CD8-positive, alpha-beta T cell (primary cell): ENCODE measurements at regions of chr3 and their contacts with region 1.

Region 1: GRCh38 chr3:196081791-196082618 is at the start of gene TFRC:
- DNase-seq: peak; percentile 86 to 98 (median 95)
- ATAC-seq: peak; percentile 90
- H3K4me3 ChIP-seq: peak within 1 kb of the TSS; percentile 84 to 98
- H3K4me3 Mint-ChIP-seq: peak within 1 kb of the TSS; percentile 97
- H3K27ac ChIP-seq: peak within 1 kb of the TSS; percentile 88 to 99
- H3K27ac Mint-ChIP-seq: peak within 1 kb of the TSS; percentile 94
- H3K4me1 ChIP-seq: peaks cover 33% of the 10 kb centered on the region
- H3K4me1 Mint-ChIP-seq: peaks cover 36% of the 10 kb centered on the region
- H3K27me3 ChIP-seq: no peaks in the 10 kb centered on the region
- H3K27me3 Mint-ChIP-seq: no peaks in the 10 kb centered on the region
- CTCF ChIP-seq: no peak
- total RNA-seq, gene TFRC: 208 to 218 TPM

Region 2: DNA sequence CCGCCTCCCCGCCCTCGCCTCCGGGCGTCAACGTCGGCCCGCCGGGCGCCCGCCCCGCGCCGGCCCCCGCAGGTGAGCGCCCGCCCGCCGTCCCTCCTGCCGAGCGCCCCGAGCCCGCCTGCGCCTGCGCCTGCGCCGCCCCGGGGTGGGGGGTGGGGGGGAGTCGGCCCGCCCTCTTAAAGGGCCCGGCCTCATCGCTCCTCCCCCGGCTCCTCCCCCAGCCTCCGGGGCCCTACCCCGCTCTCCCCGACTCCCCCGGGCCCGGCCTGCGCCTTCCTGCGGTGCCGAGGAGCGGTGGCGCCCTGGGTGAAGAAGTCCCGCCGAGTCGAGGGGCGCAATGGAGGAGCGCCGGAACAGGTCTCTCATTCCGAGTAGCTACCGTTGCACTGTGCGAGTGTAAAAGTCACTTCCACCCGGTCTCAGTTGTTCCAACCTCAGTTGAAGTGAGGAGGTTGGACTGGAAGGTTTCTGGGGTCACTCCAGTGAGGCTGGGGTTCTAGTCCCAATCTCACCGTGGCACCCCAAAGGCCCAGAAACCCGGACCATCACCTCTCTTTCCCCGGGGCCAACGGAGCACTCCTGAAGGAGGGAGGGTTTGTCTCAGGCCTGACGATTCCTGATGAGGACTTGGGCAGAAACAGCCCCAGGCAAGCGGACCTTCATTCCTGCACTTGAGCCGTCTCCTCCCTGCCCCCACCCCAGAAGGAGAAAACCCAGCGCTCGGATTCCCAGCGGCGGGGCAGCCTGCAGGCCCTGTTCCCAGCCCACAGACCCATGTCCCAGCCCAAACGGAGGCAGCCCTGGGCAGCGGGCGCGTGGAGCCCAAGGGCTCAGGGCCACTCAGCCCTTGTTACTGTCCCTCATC is 172.1 kb before region 1 on chr3:
- CTCF ChIA-PET with region 1: no interaction called
- POLR2A ChIA-PET with region 1: no interaction called
- intact Hi-C with region 1: loop called in 1 of 2 experiments (anchors 5 kb)
- DNase-seq: peak; percentile 79 to 95 (median 90)
- ATAC-seq: peak; percentile 61
- H3K4me3 ChIP-seq: peak overlapping the region; percentile 32 to 52
- H3K4me3 Mint-ChIP-seq: peak overlapping the region; percentile 77
- H3K27ac ChIP-seq: peak overlapping the region; percentile 35 to 51
- H3K27ac Mint-ChIP-seq: peak overlapping the region; percentile 78
- H3K4me1 ChIP-seq: peaks cover 37% of the 10 kb centered on the region
- H3K4me1 Mint-ChIP-seq: peaks cover 36% of the 10 kb centered on the region
- H3K27me3 ChIP-seq: no peaks in the 10 kb centered on the region
- H3K27me3 Mint-ChIP-seq: no peaks in the 10 kb centered on the region
- CTCF ChIP-seq: no peak

Region 3: GRCh38 chr3:196192036-196192523 is 110.1 kb after region 1 on chr3:
- CTCF ChIA-PET with region 1: interaction called, 313 read pairs
- POLR2A ChIA-PET with region 1: interaction called, 3 read pairs
- intact Hi-C with region 1: no loop called
- DNase-seq: peak in 7 of 9 experiments; percentile 12 to 87 (median 51)
- ATAC-seq: peak; percentile 39
- H3K4me3 ChIP-seq: no peak overlapping the region
- H3K4me3 Mint-ChIP-seq: peak overlapping the region; percentile 39
- H3K27ac ChIP-seq: peak overlapping the region; percentile 16 to 79
- H3K27ac Mint-ChIP-seq: peak overlapping the region; percentile 92
- H3K4me1 ChIP-seq: peaks cover 22% of the 10 kb centered on the region
- H3K4me1 Mint-ChIP-seq: peaks cover 18% of the 10 kb centered on the region
- H3K27me3 ChIP-seq: no peaks in the 10 kb centered on the region
- H3K27me3 Mint-ChIP-seq: no peaks in the 10 kb centered on the region
- CTCF ChIP-seq: no peak

Region 4: GRCh38 chr3:196317687-196318467 is 235.9 kb after region 1 on chr3 and contains the start of gene DYNLT2B:
- CTCF ChIA-PET with region 1: no interaction called
- POLR2A ChIA-PET with region 1: no interaction called
- intact Hi-C with region 1: loop called in 1 of 2 experiments (anchors 1 kb)
- DNase-seq: peak; percentile 73 to 95 (median 84)
- ATAC-seq: peak; percentile 90
- H3K4me3 ChIP-seq: peak within 1 kb of the TSS; percentile 79 to 81
- H3K4me3 Mint-ChIP-seq: peak within 1 kb of the TSS; percentile 92
- H3K27ac ChIP-seq: peak within 1 kb of the TSS; percentile 87 to 89
- H3K27ac Mint-ChIP-seq: peak within 1 kb of the TSS; percentile 96
- H3K4me1 ChIP-seq: no peaks in the 10 kb centered on the region
- H3K4me1 Mint-ChIP-seq: peaks cover 15% of the 10 kb centered on the region
- H3K27me3 ChIP-seq: no peaks in the 10 kb centered on the region
- H3K27me3 Mint-ChIP-seq: no peaks in the 10 kb centered on the region
- CTCF ChIP-seq: no peak
- total RNA-seq, gene DYNLT2B: 1.1 to 3.0 TPM

Region 5: GRCh38 chr3:196502775-196503195 is 420.8 kb after region 1 on chr3:
- CTCF ChIA-PET with region 1: no interaction called
- POLR2A ChIA-PET with region 1: no interaction called
- intact Hi-C with region 1: loop called (anchors 5 kb)
- DNase-seq: peak in 8 of 9 experiments; percentile 42 to 86 (median 68)
- ATAC-seq: peak; percentile 60
- H3K4me3 ChIP-seq: peak overlapping the region; percentile 65 to 76
- H3K4me3 Mint-ChIP-seq: peak overlapping the region; percentile 96
- H3K27ac ChIP-seq: peak overlapping the region; percentile 78 to 81
- H3K27ac Mint-ChIP-seq: peak overlapping the region; percentile 95
- H3K4me1 ChIP-seq: peaks cover 13% of the 10 kb centered on the region
- H3K4me1 Mint-ChIP-seq: peaks cover 34% of the 10 kb centered on the region
- H3K27me3 ChIP-seq: no peaks in the 10 kb centered on the region
- H3K27me3 Mint-ChIP-seq: no peaks in the 10 kb centered on the region
- CTCF ChIP-seq: no peak

Region 6: GRCh38 chr3:197224034-197224444 is 1142.0 kb after region 1 on chr3:
- CTCF ChIA-PET with region 1: no interaction called
- POLR2A ChIA-PET with region 1: no interaction called
- intact Hi-C with region 1: no loop called
- DNase-seq: peak in 3 of 9 experiments; percentile 5 to 58 (median 45)
- ATAC-seq: peak; percentile 56
- H3K4me3 ChIP-seq: no peak overlapping the region
- H3K4me3 Mint-ChIP-seq: no peak overlapping the region
- H3K27ac ChIP-seq: no peak overlapping the region
- H3K27ac Mint-ChIP-seq: no peak overlapping the region
- H3K4me1 ChIP-seq: no peaks in the 10 kb centered on the region
- H3K4me1 Mint-ChIP-seq: peaks cover 52% of the 10 kb centered on the region
- H3K27me3 ChIP-seq: no peaks in the 10 kb centered on the region
- H3K27me3 Mint-ChIP-seq: no peaks in the 10 kb centered on the region
- CTCF ChIP-seq: peak; percentile 65